Heart left ventricle (tissue), 16 donors: ENCODE measurements at regions of chr7 and their contacts with region 1.

Region 1: GRCh38 chr7:76333511-76334101 is 25.2 kb downstream of the YWHAG start:
- DNase-seq: peak; percentile 64 to 91 (median 82)
- ATAC-seq: peak; percentile 85 to 92 (median 90)
- H3K4me3 ChIP-seq: peak overlapping the region in 1 of 12 donors; percentile 5
- H3K27ac ChIP-seq: peak overlapping the region; percentile 43 to 90 (median 79)
- H3K4me1 ChIP-seq: peaks cover 6 to 86% (median 74%) of the 10 kb centered on the region in 12 donors
- H3K27me3 ChIP-seq: no peaks in the 10 kb centered on the region
- CTCF ChIP-seq: no peak
- POLR2A ChIP-seq: no peak

Region 2: DNA sequence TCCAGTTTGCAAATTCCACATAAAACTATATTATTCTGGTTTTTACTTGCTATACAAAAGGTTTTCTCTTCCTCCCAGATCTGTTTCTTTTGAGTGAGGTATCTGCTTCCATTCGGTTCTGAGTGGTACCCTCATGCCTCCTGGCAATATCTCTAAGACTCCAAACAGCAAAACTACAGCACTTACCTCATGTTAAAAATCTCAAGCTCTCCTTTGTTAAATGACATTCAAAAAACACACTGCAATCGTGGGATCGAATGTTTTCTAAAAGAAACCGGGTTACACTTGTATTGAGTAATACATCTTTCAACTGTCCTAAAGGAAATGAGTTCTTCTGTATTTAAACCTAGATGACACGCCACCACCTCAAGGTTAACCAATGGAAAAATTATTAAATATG is 14.1 kb after region 1 on chr7:
- intact Hi-C with region 1: loop called in 1 of 10 experiments (anchors 2 kb)
- DNase-seq: no peak
- ATAC-seq: no peak
- H3K4me3 ChIP-seq: no peak overlapping the region
- H3K27ac ChIP-seq: no peak overlapping the region
- H3K4me1 ChIP-seq: peaks cover 7 to 85% (median 53%) of the 10 kb centered on the region in 12 donors
- H3K27me3 ChIP-seq: no peaks in the 10 kb centered on the region
- CTCF ChIP-seq: no peak
- POLR2A ChIP-seq: no peak